GM12878 (cell line): ENCODE measurements at regions of chr14 and their contacts with region 1.

Region 1: GRCh38 chr14:80213599-80213998 is 2.3 kb upstream of the DIO2 start:
- DNase-seq: no peak
- ATAC-seq: peak; percentile 91
- H3K4me3 ChIP-seq: no peak overlapping the region
- H3K27ac ChIP-seq: no peak overlapping the region
- H3K4me1 ChIP-seq: no peaks in the 10 kb centered on the region
- H3K27me3 ChIP-seq: no peaks in the 10 kb centered on the region; a peak in 1 of 4 replicates
- CTCF ChIP-seq: peak; percentile 44 to 64 (median 48); a peak in 5 of 6 replicates
- EP300 ChIP-seq: no peak
- POLR2A ChIP-seq: no peak
- RAD21 ChIP-seq: peak; percentile 63

Region 2: GRCh38 chr14:80202888-80203562 is 10.6 kb before region 1 on chr14:
- CTCF ChIA-PET with region 1: interaction called, 32 read pairs
- POLR2A ChIA-PET with region 1: no interaction called
- RAD21 ChIA-PET with region 1: interaction called, 4 read pairs
- SMC1A ChIA-PET with region 1: interaction called, 4 read pairs
- in situ Hi-C with region 1: no loop called
- intact Hi-C with region 1: no loop called
- DNase-seq: no peak
- ATAC-seq: peak; percentile 71
- H3K4me3 ChIP-seq: no peak overlapping the region
- H3K27ac ChIP-seq: no peak overlapping the region
- H3K4me1 ChIP-seq: no peaks in the 10 kb centered on the region
- H3K27me3 ChIP-seq: no peaks in the 10 kb centered on the region
- CTCF ChIP-seq: peak; percentile 56 to 79 (median 65)
- EP300 ChIP-seq: no peak
- POLR2A ChIP-seq: no peak
- RAD21 ChIP-seq: peak; percentile 41

Region 3: DNA sequence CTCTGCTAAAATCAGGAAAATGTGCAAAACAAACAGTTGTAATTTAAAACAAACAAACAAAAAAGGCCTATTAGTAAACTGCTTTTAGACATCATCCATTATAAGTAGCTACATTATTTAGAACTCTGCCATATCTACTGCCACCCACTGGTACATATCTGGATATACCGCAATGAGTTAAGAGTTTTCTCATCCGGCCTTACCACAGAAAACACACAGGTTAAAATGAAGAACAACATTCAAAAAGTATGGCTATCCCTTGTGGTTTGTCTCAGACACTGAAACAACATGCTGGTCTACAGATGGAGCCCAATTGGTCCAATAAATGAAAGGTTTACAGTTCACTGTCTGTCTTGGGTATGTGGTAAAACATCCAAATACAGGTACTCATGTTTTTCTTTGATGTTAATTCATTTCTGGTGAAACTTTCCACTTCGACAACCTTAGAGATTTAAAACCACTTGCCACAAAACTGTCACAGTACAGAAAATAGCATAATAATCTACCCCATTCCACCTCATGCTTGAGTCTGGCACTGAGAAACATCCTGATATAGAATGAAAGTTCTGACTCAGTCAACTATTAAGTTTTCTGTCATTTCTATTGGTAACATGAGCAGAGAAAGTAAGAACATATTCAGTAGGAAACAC is 373.6 kb after region 1 on chr14:
- CTCF ChIA-PET with region 1: interaction called, 34 read pairs
- POLR2A ChIA-PET with region 1: no interaction called
- RAD21 ChIA-PET with region 1: interaction called, 4 read pairs
- SMC1A ChIA-PET with region 1: interaction called, 12 read pairs
- in situ Hi-C with region 1: no loop called
- intact Hi-C with region 1: loop called (anchors 5 kb)
- DNase-seq: peak; percentile 89
- ATAC-seq: peak; percentile 97
- H3K4me3 ChIP-seq: no peak overlapping the region
- H3K27ac ChIP-seq: no peak overlapping the region
- H3K4me1 ChIP-seq: peaks cover 9% of the 10 kb centered on the region; the same call in 1 of the 2 replicates
- H3K27me3 ChIP-seq: no peaks in the 10 kb centered on the region
- CTCF ChIP-seq: peak; percentile 36 to 58 (median 46); a peak in 5 of 6 replicates
- EP300 ChIP-seq: peak; percentile 36 to 71; a peak in 2 of 4 replicates
- POLR2A ChIP-seq: no peak
- RAD21 ChIP-seq: peak; percentile 44

Region 4: DNA sequence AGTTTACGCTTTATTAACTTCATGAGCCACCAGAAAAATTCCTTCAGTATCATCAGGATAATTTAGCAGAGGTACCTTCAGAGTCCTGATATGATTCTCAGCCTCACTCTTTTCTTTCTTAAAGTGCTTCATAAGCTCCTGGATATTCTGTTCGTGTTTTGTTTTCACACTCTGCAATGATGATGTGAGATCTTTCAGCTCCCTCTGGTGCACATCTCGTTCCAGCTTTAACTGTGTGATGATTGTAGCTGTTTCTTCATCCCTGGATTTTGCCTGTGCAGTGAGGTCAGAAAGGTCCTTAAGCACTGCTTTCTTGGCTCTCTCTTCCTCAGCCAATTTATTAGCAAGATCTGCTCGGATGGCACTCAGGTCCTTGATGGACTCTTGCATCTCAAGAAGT is 571.2 kb after region 1 on chr14:
- CTCF ChIA-PET with region 1: interaction called, 10 read pairs
- POLR2A ChIA-PET with region 1: no interaction called
- RAD21 ChIA-PET with region 1: no interaction called
- SMC1A ChIA-PET with region 1: no interaction called
- in situ Hi-C with region 1: no loop called
- intact Hi-C with region 1: no loop called
- DNase-seq: no peak
- ATAC-seq: no peak
- H3K4me3 ChIP-seq: no peak overlapping the region
- H3K27ac ChIP-seq: no peak overlapping the region
- H3K4me1 ChIP-seq: no peaks in the 10 kb centered on the region
- H3K27me3 ChIP-seq: no peaks in the 10 kb centered on the region
- CTCF ChIP-seq: no peak
- EP300 ChIP-seq: no peak
- POLR2A ChIP-seq: no peak
- RAD21 ChIP-seq: no peak